Left cardiac atrium (tissue), 4 donors: ENCODE measurements at regions of chr19 and their contacts with region 1.

Region 1: DNA sequence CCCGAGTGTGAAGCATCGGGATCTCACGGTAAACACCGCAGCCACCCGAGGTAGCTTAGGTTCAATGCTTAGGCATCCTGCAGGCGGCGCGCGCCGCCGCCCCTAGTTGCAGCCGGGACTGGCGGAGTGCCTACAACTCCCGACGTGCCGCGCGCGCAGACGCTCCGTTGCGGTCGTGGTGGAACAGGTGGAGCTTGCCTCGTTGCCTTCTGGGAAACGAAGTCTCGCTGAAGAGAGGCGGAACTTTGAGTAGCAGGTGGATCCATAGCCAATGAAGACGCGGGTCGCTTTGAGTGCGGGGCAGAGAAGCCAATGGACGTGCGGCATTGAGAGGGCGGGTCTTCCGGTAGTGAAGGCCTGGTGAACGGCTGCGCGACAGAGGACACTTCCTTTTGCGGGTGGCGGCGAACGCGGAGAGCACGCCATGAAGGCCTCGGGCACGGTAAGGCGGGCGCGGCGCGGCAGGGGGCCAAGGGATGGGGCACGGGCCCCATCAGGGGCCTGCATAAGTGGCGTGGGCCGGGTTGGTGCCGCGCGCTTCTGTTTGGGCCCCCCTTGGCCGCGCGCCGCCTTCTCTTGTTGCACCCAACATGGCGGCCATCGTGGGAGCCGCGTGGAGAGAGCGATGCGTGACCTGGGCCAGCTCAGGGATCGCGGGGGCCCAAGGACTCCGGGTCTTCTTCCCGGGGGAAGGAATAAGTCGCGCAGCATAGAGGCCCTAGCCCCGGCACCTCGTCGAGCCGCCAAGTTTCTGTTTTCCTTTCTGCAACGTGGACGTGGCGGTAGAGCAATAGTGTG is at the start of gene RPL18A:
- DNase-seq: peak; percentile 99
- ATAC-seq: peak; percentile 97 to 98
- total RNA-seq, gene RPL18A: 1,009 to 1,051 TPM

Region 2: GRCh38 chr19:17346109-17346671 is 513.5 kb before region 1 on chr19:
- intact Hi-C with region 1: loop called in 1 of 2 experiments (anchors 5 kb)
- DNase-seq: peak; percentile 82
- ATAC-seq: peak; percentile 82 to 84

Region 3: GRCh38 chr19:17450264-17451075 is 409.3 kb before region 1 on chr19:
- intact Hi-C with region 1: loop called in 1 of 2 experiments (anchors 10 kb)
- DNase-seq: no peak
- ATAC-seq: no peak

Region 4: DNA sequence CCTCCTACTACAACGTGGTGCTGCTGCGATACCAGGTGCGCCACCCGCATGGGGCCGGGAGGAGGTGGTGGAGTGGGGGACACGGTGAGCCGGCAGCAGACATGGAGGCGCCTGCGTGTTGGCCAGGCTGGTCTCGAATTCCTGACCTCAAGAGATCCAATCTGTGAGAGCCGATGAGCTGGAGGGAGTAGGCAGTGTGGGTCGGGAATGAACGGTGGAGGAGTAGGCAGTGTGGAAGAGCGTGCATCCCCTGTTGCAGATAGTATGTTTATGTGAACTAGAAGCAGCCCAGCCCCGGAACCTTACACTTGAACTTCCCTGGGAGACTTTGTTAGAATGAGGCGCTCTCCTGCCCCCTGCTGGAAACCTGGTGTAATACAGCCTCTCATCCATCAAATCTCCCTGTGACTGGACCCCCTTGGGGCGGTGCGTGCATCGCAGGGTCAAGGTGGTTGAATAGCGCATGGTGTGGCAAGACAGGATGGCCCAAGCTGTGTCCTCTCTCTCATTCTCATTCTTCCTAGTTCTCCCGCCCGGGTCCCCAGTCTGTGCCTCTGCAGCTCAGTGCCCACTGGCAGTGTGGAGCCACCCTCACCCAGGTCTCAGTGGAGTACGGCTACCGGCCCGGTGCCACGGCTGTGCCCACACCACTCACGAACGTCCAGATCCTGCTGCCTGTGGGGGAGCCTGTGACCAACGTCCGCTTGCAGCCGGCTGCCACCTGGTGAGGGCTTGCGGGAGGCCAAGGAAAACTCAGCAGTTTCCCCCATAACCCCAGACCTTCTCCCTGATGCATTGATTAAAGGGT is 75.3 kb before region 1 on chr19:
- intact Hi-C with region 1: loop called in 1 of 2 experiments (anchors 10 kb)
- DNase-seq: peak; percentile 62
- ATAC-seq: peak; percentile 40 to 51

Region 5: DNA sequence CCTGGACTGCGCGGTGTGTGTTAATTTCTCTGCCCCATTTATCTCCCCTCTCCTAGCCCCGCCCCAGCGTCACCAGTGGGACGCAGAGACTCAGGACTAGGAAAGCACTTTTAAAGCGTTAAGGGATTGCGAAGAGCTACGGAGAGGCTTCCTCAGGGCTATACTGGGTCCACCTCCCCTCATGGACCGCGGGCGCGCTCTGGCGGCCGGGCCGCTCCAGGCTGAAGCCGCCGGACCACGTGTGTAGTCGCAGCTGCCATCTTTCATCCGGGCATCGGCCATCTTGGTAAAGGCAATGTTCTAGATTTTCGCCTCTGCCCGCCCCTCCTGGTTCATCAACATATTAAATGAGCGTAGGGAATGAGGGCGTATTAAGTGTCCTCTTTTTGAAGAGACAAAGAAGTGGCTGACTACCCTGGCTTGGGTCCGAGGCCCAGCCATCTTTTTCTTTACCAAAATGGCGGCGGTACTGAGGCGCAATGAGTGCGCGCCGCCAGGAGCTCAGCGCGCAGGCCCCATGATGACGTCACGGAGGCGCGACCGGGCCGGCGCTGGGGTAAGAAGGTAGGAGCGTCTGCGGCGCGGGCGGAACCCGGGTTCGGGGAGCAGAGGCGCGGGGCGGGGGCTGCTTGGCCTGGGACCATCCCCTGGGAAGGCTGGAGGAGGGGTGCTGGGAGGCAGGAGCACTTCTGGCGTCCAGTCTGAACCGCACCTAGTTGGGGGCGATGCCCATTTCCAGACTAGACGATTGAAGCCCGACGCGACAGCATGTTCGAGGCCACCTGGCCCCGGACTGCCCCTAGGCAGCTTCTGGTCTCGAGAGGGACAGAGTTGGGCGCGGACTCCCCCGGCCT is 73.0 kb after region 1 on chr19 and contains the start of gene CCDC124:
- intact Hi-C with region 1: loop called in 1 of 2 experiments (anchors 2 kb)
- DNase-seq: peak; percentile 93
- ATAC-seq: peak; percentile 97 to 98
- total RNA-seq, gene CCDC124: 74.5 to 86.8 TPM

Region 6: GRCh38 chr19:18074190-18074589 is 214.5 kb after region 1 on chr19:
- intact Hi-C with region 1: no loop called
- DNase-seq: no peak
- ATAC-seq: no peak